ENCODE measurements at regions of chr9 and their contacts with region 1.

Region 1: GRCh38 chr9:121217609-121218292 is 16.1 kb upstream of the RAB14 start:
- DNase-seq: no peak
- H3K4me3 ChIP-seq: no peak overlapping the region
- H3K27ac ChIP-seq: no peak overlapping the region
- H3K4me1 ChIP-seq: peaks cover 10% of the 10 kb centered on the region
- H3K27me3 ChIP-seq: no peaks in the 10 kb centered on the region
- CTCF ChIP-seq: no peak
- POLR2A ChIP-seq: no peak

Region 2: GRCh38 chr9:121267689-121268597 is 50.2 kb after region 1 on chr9 and contains the start of gene GSN:
- intact Hi-C with region 1: loop called (anchors 2 kb)
- DNase-seq: no peak
- H3K4me3 ChIP-seq: peak within 1 kb of the TSS; percentile 78 to 87
- H3K27ac ChIP-seq: peak within 1 kb of the TSS; percentile 97
- H3K4me1 ChIP-seq: peaks cover 59% of the 10 kb centered on the region
- H3K27me3 ChIP-seq: no peaks in the 10 kb centered on the region
- CTCF ChIP-seq: no peak
- POLR2A ChIP-seq: peak in 1 of 2 donors; percentile 76
- total RNA-seq, gene GSN: 2,053 TPM

Region 3: GRCh38 chr9:121312166-121312565 is 94.4 kb after region 1 on chr9:
- intact Hi-C with region 1: loop called (anchors 5 kb)
- DNase-seq: no peak
- H3K4me3 ChIP-seq: no peak overlapping the region
- H3K27ac ChIP-seq: no peak overlapping the region
- H3K4me1 ChIP-seq: peaks cover 30% of the 10 kb centered on the region
- H3K27me3 ChIP-seq: no peaks in the 10 kb centered on the region
- CTCF ChIP-seq: no peak
- POLR2A ChIP-seq: no peak

Region 4: DNA sequence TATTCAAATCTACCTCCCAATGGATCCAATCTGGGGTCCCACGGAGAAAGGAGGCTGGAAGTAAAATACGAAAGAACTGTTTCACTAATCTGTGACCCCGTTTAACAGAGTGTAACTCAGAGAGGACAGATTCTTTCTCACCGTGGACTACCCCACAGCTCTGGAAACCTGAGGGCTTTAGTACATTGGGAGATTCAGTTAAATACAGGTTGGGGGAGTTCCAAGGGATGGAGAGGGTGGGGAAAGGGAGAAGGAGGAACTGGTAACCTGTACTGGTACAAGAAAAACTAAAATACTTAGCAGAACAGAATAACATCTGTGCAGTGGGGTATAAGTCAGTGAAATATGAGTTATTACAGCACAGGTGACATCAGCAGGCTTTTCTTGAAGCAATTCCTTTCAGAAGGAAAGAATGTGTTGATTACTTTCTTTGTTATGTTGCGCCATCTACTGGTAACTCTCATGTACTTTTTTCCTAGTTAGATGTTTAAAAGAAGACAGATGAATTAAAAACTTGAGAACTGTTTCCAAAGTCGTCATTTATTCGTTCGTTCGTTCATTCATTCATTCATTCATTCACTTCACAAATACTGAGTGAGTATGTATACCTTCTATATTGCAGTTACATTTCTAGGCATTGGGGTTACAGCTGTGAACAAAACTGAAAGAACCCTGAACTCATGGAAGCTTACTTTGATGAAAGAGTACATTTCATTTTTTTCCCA is 182.3 kb after region 1 on chr9:
- intact Hi-C with region 1: loop called (anchors 5 kb)
- DNase-seq: no peak
- H3K4me3 ChIP-seq: no peak overlapping the region
- H3K27ac ChIP-seq: no peak overlapping the region
- H3K4me1 ChIP-seq: peaks cover 6% of the 10 kb centered on the region
- H3K27me3 ChIP-seq: no peaks in the 10 kb centered on the region
- CTCF ChIP-seq: peak; percentile 61 to 80 (median 80)
- POLR2A ChIP-seq: no peak